HEK293T (cell line): ENCODE measurements at regions of chr6 and their contacts with region 1.

Region 1: DNA sequence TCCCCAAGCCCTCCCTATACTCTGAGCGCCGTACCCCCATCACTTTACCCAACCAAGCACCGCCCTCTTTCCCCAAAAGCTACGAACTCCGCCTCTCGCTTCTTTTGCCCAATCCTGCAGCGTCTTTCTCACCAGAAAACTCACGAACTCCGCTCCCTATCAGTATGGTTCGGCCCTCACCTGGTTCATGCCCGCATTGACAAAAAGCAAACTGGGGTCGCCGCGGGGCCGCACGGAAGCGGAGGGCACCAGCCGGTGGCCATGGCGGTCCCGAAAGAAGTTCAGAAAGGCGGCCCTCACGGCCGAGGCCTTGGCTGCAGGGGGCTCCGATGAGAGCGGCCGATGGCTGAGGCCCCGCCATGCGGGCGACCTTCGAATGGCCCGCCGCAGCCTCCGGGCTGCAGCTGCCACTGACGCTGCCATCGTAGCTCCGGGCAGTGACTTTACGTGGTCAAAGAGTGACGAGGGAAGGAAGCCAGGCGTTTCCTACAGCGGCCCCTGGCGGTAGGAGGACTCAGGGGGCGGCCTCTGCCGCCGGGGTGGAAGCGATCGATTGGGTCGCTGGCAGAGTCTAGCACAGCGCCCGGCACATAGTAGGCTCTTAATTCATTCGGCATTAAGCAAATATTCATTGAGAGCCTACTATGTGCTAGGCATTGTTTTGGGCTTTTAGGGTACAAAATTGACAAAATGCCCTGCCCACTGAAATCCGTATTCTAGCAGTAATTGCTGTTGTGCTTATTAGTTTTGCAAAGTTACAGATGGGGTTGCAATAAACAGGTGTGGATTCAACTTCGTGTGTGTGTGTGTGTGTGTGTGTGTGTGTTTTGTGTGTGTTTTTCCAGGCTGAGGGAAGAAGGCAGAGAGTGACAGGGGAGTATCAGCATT is at the start of gene AARS2:
- DNase-seq: peak; percentile 92

Region 2: DNA sequence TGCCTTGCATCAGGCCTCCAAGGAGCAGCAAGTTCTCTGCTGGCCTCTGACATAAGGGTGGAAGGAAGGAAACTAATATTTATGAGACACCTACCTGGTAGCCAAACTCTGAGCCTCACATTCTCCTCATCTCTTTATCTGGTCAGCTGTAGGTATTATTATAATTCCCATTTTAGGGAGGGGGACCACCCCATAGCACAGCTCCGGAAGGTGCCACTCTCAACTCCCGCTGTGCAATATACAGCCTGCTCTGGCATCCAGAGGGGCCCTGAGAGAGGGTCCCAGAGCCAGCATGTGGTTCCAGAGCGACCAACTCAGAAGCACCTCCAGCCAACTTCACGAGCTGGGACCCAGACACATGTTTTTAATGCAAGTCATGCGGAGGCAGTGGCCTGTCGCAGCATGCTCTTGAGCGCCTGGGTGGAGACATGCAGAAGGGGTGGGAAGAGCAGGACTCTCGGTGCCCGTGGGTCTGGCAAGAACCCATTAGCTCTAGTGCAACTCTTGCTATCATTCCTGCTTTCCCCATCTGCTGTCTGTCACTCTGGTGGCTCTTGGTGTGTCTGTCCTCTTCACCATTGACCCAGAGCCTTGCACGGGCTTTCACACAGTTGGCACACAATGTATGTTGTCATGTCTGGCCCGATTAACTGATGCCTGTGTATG is 111.4 kb before region 1 on chr6:
- CTCF ChIA-PET with region 1: no interaction called
- POLR2A ChIA-PET with region 1: no interaction called
- DNase-seq: no peak

Region 3: GRCh38 chr6:44265007-44265721 is 48.0 kb before region 1 on chr6 and contains the start of gene NFKBIE:
- CTCF ChIA-PET with region 1: interaction called, 4 read pairs
- POLR2A ChIA-PET with region 1: interaction called, 14 read pairs
- DNase-seq: peak; percentile 93

Region 4: DNA sequence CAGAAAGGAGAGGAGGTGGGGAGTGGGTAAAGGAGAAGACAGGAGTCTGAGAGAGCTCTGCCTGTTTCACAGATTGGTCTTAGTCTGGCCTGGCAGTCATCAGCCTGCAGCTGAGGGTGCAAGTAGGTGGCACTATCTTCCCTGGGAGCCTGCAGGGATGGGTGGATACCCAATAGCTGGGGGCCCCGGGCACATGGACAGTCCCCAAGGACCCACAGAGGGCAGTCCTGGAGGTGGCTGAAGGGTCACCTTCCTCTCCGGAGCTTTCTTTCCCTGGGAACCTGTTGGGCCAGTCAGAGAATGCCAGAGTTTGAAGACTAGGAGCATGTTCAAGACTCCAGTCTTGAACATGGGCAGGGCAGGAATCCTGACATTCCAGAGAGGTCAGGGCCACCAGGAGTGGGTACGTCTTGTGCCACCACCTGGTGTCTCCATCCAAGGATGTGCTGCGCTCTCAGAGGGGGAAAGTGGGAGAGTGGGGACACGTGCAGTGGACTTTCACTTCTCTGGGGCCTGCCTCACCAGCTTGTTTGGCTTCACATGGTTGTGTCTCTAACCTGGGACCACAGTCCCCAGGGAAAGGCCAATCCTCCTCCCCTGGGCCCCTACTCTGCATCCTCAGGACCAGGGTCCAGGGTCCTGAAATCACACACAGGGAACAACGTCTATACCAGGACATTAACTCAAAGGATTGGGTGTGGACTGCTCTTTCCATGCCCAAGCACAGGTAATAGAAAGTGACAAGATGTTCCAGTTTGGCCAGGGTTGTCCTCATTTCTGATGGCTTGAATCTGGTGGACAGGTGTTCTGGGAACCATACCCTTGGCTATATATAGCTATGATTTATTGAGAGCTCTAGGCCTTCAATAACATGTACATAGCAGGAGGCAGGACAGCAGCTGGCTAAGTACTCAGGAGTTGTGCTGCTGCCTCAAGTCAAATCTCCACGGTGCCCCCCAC is 18.0 kb before region 1 on chr6:
- CTCF ChIA-PET with region 1: interaction called, 5 read pairs
- POLR2A ChIA-PET with region 1: interaction called, 11 read pairs
- DNase-seq: no peak